ENCODE measurements at regions of chr3 and their contacts with region 1.

Region 1: GRCh38 chr3:48157950-48158376 is 30.3 kb downstream of the CDC25A start:
- DNase-seq: peak; percentile 48 to 81 (median 68)
- ATAC-seq: peak in 3 of 4 donors; percentile 55 to 73 (median 71)
- H3K4me3 ChIP-seq: no peak overlapping the region
- H3K27ac ChIP-seq: no peak overlapping the region
- H3K4me1 ChIP-seq: peaks cover 0 to 6% (median 0%) of the 10 kb centered on the region in 12 donors
- H3K27me3 ChIP-seq: no peaks in the 10 kb centered on the region
- CTCF ChIP-seq: peak; percentile 62 to 83 (median 75)
- POLR2A ChIP-seq: no peak

Region 2: GRCh38 chr3:47824541-47825473 is 333.2 kb before region 1 on chr3:
- intact Hi-C with region 1: loop called in 2 of 10 experiments (anchors 1 to 5 kb)
- DNase-seq: peak; percentile 75 to 89 (median 80)
- ATAC-seq: peak; percentile 83 to 99 (median 98)
- H3K4me3 ChIP-seq: peak overlapping the region; percentile 49 to 99 (median 84)
- H3K27ac ChIP-seq: peak overlapping the region; percentile 1 to 90 (median 82)
- H3K4me1 ChIP-seq: peaks cover 0 to 25% (median 20%) of the 10 kb centered on the region in 12 donors
- H3K27me3 ChIP-seq: no peaks in the 10 kb centered on the region
- CTCF ChIP-seq: peak; percentile 74 to 94 (median 87)
- POLR2A ChIP-seq: peak in 1 of 2 donors; percentile 37

Region 3: GRCh38 chr3:47836986-47837385 is 321.0 kb before region 1 on chr3:
- intact Hi-C with region 1: loop called in 6 of 10 experiments (anchors 1 to 5 kb)
- DNase-seq: no peak
- ATAC-seq: no peak
- H3K4me3 ChIP-seq: no peak overlapping the region
- H3K27ac ChIP-seq: no peak overlapping the region
- H3K4me1 ChIP-seq: peaks cover 0 to 8% (median 0%) of the 10 kb centered on the region in 12 donors
- H3K27me3 ChIP-seq: no peaks in the 10 kb centered on the region
- CTCF ChIP-seq: no peak
- POLR2A ChIP-seq: no peak

Region 4: DNA sequence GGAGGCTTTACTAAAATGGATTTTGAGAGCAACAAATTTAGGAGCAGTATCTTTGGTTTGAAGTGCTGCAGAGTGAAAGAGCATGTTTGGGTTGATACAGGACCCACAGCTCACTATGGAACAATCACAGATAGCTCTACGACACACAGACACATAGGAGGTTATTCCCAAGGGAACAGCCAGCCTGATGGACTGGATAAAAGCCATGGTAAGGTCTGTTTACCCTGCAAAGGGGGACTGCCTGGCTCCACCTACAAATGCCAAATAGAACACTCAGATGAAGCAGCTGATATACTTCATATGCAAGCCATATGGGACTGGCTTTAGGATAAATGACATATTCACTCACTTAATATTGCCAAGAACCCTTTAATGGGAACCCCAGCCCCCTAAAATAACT is 45.1 kb before region 1 on chr3:
- intact Hi-C with region 1: no loop called
- DNase-seq: no peak
- ATAC-seq: no peak
- H3K4me3 ChIP-seq: peak overlapping the region in 1 of 12 donors; percentile 10
- H3K27ac ChIP-seq: peak overlapping the region in 2 of 12 donors; percentile 33 to 76
- H3K4me1 ChIP-seq: peaks cover 0 to 16% (median 5%) of the 10 kb centered on the region in 12 donors
- H3K27me3 ChIP-seq: no peaks in the 10 kb centered on the region
- CTCF ChIP-seq: no peak
- POLR2A ChIP-seq: no peak

Measured in heart left ventricle (tissue), 16 donors.